ENCODE measurements at regions of chr6 and their contacts with region 1.

Region 1: DNA sequence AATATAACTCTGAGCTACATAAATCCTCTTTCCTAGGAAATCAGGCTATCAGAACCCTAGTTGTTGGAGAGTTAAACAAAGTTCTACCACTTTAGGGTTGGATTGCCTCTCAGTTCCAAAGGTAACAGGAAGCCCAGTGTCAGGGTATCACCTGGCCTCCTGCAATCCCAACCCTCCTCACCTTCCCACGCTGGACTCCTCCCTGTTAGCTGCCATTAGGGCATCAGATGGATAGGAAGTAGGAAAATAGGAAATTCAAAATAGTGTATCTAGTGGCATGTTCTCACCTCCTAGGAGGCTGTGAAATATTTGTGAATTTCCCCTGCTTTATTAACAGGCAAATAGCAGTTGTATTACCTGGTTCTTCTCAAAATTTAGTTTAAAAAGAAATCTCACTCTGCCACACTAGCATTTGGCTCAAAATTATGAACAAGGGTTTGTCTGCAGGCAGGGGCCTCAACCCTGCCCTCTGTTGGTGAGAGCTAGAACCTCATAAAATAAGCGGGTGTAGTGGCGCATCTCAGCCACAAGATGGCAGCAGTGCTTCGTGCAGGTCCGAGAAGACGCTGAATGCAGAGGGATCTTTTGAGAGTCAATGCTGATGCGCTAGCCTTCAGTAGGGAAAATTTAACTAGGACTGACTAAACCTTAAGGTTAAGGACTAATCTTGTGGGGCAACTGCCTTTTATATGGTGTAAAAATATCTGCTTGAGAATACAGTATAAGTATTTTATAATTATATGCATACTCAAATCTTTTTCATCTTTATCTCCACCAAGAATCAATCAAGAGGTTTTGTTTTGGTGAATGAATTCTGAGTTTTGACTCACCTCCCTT is 209.8 kb upstream of the KCNQ5 start:
- DNase-seq: peak; percentile 41 to 70
- ATAC-seq: peak; percentile 39 to 75; a peak in 4 of 6 replicates
- H3K4me3 ChIP-seq: no peak overlapping the region
- H3K27ac ChIP-seq: no peak overlapping the region
- H3K4me1 ChIP-seq: no peaks in the 10 kb centered on the region
- CTCF ChIP-seq: peak; percentile 100
- EP300 ChIP-seq: no peak
- POLR2A ChIP-seq: no peak
- RAD21 ChIP-seq: peak; percentile 97

Region 2: GRCh38 chr6:72218125-72218524 is 194.0 kb before region 1 on chr6:
- CTCF ChIA-PET with region 1: no interaction called
- POLR2A ChIA-PET with region 1: no interaction called
- DNase-seq: peak; percentile 5 to 37
- ATAC-seq: peak; percentile 96 to 98
- H3K4me3 ChIP-seq: no peak overlapping the region
- H3K27ac ChIP-seq: no peak overlapping the region
- H3K4me1 ChIP-seq: no peaks in the 10 kb centered on the region
- CTCF ChIP-seq: no peak
- EP300 ChIP-seq: no peak
- POLR2A ChIP-seq: no peak
- RAD21 ChIP-seq: 0 out of 5 replicates have a peak, but pooled peaks of 1 of the 2 experiments have one; percentile 4

Region 3: DNA sequence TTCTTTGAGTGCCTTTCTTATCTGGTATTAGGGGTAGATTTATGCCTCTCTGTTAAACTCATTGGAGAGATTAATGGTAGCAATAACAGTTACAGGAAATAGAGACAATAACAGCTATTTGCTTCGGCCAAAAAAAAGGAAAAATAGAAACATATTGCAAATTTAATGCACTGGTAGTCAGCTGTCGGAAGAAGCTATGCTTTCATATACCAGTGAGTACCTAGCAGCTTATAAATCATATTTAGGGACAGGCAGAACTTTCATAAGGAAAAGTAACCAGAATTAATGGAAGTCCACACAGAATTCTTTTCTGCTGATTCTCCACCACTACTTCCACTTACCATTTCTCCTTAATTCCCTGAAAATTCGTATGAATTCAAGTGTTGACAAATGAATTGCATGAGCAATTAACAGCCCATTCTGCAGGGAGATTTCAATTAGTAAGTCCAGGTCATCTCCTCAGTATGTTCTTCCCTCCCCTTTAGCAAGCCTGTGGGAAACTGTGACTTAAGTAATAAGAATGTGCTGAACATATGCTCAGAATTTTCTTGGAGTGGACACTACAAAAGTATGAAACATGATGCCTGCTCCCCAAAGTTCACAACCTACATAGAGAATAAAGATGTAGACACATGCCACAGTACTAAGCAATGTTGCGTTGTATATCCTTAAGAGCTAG is 13.1 kb after region 1 on chr6:
- CTCF ChIA-PET with region 1: interaction called, 19 read pairs
- POLR2A ChIA-PET with region 1: no interaction called
- DNase-seq: no peak
- ATAC-seq: no peak
- H3K4me3 ChIP-seq: no peak overlapping the region
- H3K27ac ChIP-seq: no peak overlapping the region
- H3K4me1 ChIP-seq: no peaks in the 10 kb centered on the region
- CTCF ChIP-seq: no peak
- EP300 ChIP-seq: no peak
- POLR2A ChIP-seq: no peak
- RAD21 ChIP-seq: no peak

Region 4: DNA sequence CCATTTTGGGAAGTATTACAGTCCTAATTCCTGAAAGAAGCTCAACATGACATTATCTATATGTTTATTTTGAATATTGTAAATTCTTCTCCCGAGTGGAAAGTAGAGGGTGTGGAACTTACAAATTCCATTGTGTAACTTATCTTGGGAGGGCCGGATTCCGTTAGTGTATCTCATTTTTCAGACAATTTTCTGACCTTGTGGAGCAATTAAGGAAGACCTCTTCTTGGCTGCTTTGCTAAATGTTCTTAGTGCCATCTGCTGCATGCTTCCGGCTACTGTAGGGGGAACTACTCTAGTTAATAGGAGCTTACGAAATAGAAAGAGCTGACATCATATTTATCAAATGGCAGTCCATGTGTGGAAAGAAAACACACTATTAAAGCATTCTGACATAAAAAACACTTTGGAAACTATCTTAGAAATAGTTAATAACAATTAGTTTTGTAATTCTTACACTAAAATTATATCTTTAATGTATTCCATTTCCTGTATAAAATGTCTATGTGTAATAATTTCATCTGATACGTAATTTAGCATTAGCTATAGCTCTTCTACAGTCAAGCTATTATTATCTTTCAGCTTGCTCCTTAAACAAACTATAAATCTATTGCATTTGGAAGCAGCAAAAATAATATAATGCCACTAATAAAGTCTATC is 168.3 kb after region 1 on chr6:
- CTCF ChIA-PET with region 1: interaction called, 62 read pairs
- POLR2A ChIA-PET with region 1: no interaction called
- DNase-seq: peak; percentile 19 to 67
- ATAC-seq: peak; percentile 78 to 89
- H3K4me3 ChIP-seq: no peak overlapping the region
- H3K27ac ChIP-seq: no peak overlapping the region
- H3K4me1 ChIP-seq: no peaks in the 10 kb centered on the region
- CTCF ChIP-seq: peak; percentile 55
- EP300 ChIP-seq: no peak
- POLR2A ChIP-seq: no peak
- RAD21 ChIP-seq: peak; percentile 72 to 75

Region 5: DNA sequence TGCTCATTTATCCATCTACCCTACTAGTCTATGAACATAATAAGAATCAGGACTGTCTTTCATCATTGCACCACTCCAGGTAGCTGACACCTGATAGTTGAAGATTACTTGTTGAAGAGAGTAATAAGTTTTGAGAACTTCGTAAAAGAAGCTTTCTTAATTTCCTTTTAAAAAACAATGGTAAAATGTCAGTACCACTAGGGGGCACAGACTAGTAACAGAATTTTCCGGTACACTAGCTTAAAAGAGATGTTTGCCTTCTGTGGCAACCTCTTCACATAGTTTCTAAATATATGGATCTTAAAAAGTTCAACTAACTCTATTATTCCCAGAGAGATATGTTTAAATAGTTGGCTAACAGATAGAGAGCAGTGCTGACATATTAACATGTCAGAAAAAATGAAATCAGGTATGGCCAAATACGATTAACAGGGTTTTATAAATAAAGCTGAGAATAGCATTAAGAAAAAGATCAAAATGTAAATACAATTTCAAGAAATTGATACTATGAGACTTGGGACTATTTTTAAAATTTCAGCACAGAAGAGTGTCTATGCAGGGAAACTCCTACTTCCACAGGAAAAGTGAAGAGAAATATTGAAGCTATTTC is 204.4 kb after region 1 on chr6:
- CTCF ChIA-PET with region 1: interaction called, 15 read pairs
- POLR2A ChIA-PET with region 1: no interaction called
- DNase-seq: peak in 1 of 2 experiments; percentile 31
- ATAC-seq: no peak
- H3K4me3 ChIP-seq: no peak overlapping the region
- H3K27ac ChIP-seq: no peak overlapping the region
- H3K4me1 ChIP-seq: no peaks in the 10 kb centered on the region
- CTCF ChIP-seq: peak; percentile 64
- EP300 ChIP-seq: no peak
- POLR2A ChIP-seq: no peak
- RAD21 ChIP-seq: peak; percentile 64 to 65

Region 6: GRCh38 chr6:73129653-73130443 is 717.8 kb after region 1 on chr6:
- CTCF ChIA-PET with region 1: interaction called, 12 read pairs
- POLR2A ChIA-PET with region 1: no interaction called
- DNase-seq: peak; percentile 37 to 61
- ATAC-seq: peak; percentile 99
- H3K4me3 ChIP-seq: no peak overlapping the region
- H3K27ac ChIP-seq: peak overlapping the region in 1 of 2 experiments; percentile 61; a peak in 1 of 6 replicates
- H3K4me1 ChIP-seq: no peaks in the 10 kb centered on the region; the same call in 2 of the 3 replicates
- CTCF ChIP-seq: peak; percentile 90
- EP300 ChIP-seq: no peak
- POLR2A ChIP-seq: no peak
- RAD21 ChIP-seq: peak; percentile 95 to 97

Region 7: DNA sequence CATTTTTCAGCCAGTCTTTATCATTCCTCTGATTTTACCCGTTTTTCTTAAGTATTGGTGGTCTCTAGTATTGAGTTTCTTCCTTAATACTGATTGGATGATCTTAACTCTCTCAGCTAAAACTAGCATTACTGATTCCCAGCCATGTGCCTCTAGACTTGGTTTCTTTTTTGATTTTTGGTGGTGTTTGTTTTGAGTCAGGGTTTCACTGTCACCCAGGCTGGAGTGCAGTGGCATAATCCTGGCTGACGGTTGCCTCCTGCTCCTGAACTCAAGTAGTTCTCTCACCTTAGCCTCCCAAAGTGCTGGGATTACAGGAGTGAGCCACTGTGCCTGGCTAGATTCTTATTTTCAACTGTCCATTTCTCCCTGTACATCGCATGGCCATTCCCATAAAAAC is 917.1 kb after region 1 on chr6:
- CTCF ChIA-PET with region 1: interaction called, 19 read pairs
- POLR2A ChIA-PET with region 1: no interaction called
- DNase-seq: no peak
- ATAC-seq: no peak
- H3K4me3 ChIP-seq: no peak overlapping the region
- H3K27ac ChIP-seq: no peak overlapping the region
- H3K4me1 ChIP-seq: no peaks in the 10 kb centered on the region
- CTCF ChIP-seq: no peak
- EP300 ChIP-seq: no peak
- POLR2A ChIP-seq: no peak
- RAD21 ChIP-seq: no peak